Heart right ventricle (tissue), 16 donors: ENCODE measurements at regions of chr2 and their contacts with region 1.

Region 1: GRCh38 chr2:231674587-231675338 is 33.6 kb upstream of the PTMA start:
- DNase-seq: peak; percentile 77 to 80
- ATAC-seq: peak; percentile 39 to 58 (median 54)
- H3K4me3 ChIP-seq: no peak overlapping the region
- H3K27ac ChIP-seq: peak overlapping the region; percentile 58 to 97 (median 88)
- H3K4me1 ChIP-seq: peaks cover 21 to 63% (median 60%) of the 10 kb centered on the region in 9 donors
- H3K27me3 ChIP-seq: no peaks in the 10 kb centered on the region
- CTCF ChIP-seq: peak; percentile 75 to 96 (median 88)

Region 2: GRCh38 chr2:230541934-230542380 is 1132.8 kb before region 1 on chr2:
- intact Hi-C with region 1: no loop called
- DNase-seq: no peak
- ATAC-seq: no peak
- H3K4me3 ChIP-seq: no peak overlapping the region
- H3K27ac ChIP-seq: no peak overlapping the region
- H3K4me1 ChIP-seq: no peaks in the 10 kb centered on the region
- H3K27me3 ChIP-seq: no peaks in the 10 kb centered on the region
- CTCF ChIP-seq: no peak

Region 3: DNA sequence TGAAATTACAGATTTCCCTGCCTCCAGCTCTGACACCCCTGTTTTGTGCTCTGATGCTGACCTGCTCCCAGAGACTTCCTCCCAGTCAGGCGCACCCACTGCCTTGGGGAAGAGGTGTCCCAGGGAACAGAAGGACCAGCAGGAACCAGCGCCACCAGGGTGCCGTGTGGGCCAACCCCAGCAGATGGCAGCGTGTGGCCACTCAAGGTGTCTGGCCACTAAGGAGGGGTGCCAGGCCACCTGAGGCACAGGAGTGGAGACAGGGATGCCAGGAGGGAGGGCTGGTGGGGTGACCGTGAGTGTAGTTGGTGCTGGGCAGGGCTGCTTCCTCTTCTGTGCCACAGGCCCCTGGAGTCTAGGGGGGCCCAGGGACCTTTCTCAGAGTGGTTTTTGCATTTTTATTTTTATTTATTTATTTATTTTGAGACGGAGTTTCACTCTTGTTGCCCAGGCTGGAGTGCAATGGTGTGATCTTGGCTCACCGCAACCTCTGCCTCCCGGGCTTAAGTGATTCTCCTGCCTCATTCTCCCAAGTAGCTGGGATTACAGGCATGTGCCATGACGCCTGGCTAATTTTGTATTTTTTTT is 26.1 kb before region 1 on chr2:
- intact Hi-C with region 1: loop called in 5 of 10 experiments (anchors 1 to 2 kb)
- DNase-seq: peak; percentile 68 to 79
- ATAC-seq: peak; percentile 63 to 84 (median 78)
- H3K4me3 ChIP-seq: no peak overlapping the region
- H3K27ac ChIP-seq: no peak overlapping the region
- H3K4me1 ChIP-seq: peaks cover 13 to 36% (median 27%) of the 10 kb centered on the region in 9 donors
- H3K27me3 ChIP-seq: no peaks in the 10 kb centered on the region
- CTCF ChIP-seq: peak; percentile 45 to 81 (median 69)